ENCODE measurements at regions of chr7 and their contacts with region 1.

Region 1: GRCh38 chr7:102279537-102280400 is 6.9 kb upstream of the SH2B2 start:
- DNase-seq: peak; percentile 61
- ATAC-seq: peak; percentile 90

Region 2: DNA sequence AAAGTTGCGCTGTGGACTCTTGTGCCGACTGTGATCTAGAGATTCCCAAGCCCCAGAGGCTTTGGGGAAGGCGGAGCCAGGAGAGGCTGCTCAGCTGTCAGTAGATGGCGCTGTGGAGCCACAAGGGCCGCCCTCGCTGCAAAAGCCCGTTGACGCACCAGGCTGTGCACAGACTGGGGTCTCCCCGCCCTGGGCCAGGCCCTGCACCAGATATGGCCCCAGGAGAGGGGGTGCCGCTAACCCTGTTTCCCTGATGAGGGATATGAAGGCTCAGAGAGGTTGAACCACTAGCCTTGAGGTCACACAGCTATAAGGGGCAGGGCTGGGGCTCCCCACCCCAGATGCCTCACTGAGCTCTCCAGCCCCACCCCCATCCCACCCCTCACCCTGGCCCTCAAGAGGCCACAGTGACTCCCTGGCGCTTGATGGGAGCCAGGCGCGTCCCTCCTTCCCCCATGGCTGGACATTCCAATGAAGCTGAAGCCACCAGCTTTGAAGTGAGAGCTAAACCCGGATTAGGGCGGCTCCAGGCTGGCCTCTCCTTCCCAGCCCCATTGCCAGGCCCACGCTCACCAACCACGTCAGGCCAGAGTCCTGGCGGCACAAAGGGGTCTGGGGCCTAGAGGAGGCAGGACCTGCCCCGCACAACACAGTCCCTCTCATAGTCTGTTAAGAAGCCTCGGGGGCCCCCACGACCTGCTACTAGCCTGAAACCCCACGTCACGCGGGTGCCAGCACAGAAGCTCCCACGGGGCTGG is 677.1 kb before region 1 on chr7:
- intact Hi-C with region 1: loop called (anchors 10 kb)
- DNase-seq: peak; percentile 84
- ATAC-seq: peak; percentile 95

Region 3: DNA sequence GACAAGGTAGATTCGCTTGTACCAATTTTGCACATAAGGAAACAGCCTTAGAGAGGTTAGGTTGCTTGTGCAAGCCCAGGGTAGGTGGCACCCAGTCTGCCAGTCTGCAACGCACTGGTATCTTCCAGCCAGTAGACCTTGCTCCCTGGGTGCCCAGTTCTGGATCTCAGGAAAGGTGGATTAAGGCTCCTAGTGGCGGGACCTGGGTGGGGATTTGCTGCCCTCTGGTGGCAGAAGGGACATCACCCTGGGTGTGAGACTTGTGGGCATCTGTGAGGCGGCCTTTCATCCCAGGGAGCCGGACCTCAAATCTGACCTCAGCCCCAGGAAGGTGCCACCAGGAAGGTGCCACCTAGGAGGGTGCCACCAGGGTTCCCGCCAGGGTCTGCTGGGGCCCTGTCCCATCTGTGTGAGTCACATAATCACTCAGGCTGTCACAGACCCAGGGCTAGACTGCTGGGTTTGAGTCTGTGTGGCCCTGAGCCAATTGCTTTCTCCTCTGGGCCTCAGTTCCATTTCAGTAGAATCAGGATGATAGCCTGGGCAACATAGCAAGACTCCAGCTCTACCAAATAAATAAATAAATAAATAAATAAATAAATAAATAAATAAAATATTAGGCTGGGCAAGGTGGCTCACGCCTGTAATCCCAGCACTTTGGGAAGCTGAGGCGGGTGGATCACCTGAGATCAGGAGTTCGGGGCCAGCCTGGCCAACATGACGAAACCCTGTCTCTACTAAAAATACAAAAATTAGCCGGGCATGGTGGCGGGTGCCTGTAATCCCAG is 111.1 kb after region 1 on chr7:
- intact Hi-C with region 1: loop called (anchors 2 kb)
- DNase-seq: peak; percentile 86
- ATAC-seq: peak; percentile 89